ENCODE measurements at regions of chr4 and their contacts with region 1.

Region 1: GRCh38 chr4:80184053-80184790 is 13.1 kb upstream of the PRDM8 start:
- DNase-seq: peak; percentile 94
- H3K4me3 Mint-ChIP-seq: peak overlapping the region; percentile 88
- H3K27ac Mint-ChIP-seq: peak overlapping the region; percentile 85
- H3K4me1 Mint-ChIP-seq: peaks cover 46% of the 10 kb centered on the region
- H3K27me3 Mint-ChIP-seq: peaks cover 7% of the 10 kb centered on the region

Region 2: GRCh38 chr4:79923281-79923680 is 260.9 kb before region 1 on chr4:
- CTCF ChIA-PET with region 1: no interaction called
- POLR2A ChIA-PET with region 1: no interaction called
- intact Hi-C with region 1: loop called (anchors 10 kb)
- DNase-seq: no peak
- H3K4me3 Mint-ChIP-seq: no peak overlapping the region
- H3K27ac Mint-ChIP-seq: no peak overlapping the region
- H3K4me1 Mint-ChIP-seq: peaks cover 11% of the 10 kb centered on the region
- H3K27me3 Mint-ChIP-seq: no peaks in the 10 kb centered on the region

Region 3: DNA sequence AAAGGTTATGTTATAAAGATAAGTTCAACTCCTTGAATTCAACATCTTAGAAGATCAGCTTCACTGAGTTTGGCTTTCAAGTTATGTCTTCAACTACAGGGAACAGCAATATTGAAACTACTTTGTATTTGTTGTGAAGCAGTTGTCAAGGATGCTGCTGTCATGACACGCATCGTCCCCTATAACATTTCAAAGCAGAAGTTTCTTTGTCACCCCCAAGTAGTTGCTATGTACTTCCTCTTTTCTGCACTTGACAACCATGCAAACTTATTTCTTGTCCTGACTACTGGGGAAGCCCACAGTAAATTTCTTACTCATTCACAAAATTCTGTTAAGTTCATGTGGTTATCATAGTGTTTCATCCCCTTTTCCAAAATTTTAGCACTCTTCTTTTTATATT is 125.5 kb before region 1 on chr4:
- CTCF ChIA-PET with region 1: interaction called, 4 read pairs
- POLR2A ChIA-PET with region 1: interaction called, 6 read pairs
- intact Hi-C with region 1: loop called (anchors 1 kb)
- DNase-seq: peak; percentile 66
- H3K4me3 Mint-ChIP-seq: peak overlapping the region; percentile 72
- H3K27ac Mint-ChIP-seq: peak overlapping the region; percentile 91
- H3K4me1 Mint-ChIP-seq: peaks cover 70% of the 10 kb centered on the region
- H3K27me3 Mint-ChIP-seq: no peaks in the 10 kb centered on the region

Region 4: GRCh38 chr4:80138551-80139538 is 45.4 kb before region 1 on chr4:
- CTCF ChIA-PET with region 1: interaction called, 9 read pairs
- POLR2A ChIA-PET with region 1: interaction called, 3 read pairs
- intact Hi-C with region 1: loop called (anchors 1 kb)
- DNase-seq: peak; percentile 77
- H3K4me3 Mint-ChIP-seq: no peak overlapping the region
- H3K27ac Mint-ChIP-seq: peak overlapping the region; percentile 64
- H3K4me1 Mint-ChIP-seq: peaks cover 57% of the 10 kb centered on the region
- H3K27me3 Mint-ChIP-seq: no peaks in the 10 kb centered on the region

Region 5: DNA sequence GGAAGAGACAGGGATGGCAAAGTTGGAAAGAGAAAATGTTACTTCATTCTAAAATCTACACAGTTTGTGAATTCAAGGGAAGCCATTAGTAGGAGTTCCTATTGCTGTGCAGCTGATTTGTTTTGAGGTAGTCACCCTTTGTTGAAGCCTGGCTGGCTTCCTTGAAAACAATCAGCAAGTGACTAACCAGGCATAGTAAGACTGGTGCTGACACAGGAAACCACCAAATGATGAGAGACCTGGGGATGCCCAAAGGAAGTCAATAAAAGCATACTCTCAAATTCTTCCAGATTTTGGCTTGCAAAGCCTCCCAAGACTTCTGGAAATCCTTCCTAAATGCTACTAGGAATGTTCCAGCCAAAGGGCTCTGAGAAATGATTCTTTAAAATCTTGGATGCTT is 10.8 kb before region 1 on chr4:
- CTCF ChIA-PET with region 1: interaction called, 76 read pairs
- POLR2A ChIA-PET with region 1: interaction called, 18 read pairs
- intact Hi-C with region 1: loop called (anchors 1 kb)
- DNase-seq: peak; percentile 71
- H3K4me3 Mint-ChIP-seq: peak overlapping the region; percentile 18
- H3K27ac Mint-ChIP-seq: peak overlapping the region; percentile 81
- H3K4me1 Mint-ChIP-seq: peaks cover 55% of the 10 kb centered on the region
- H3K27me3 Mint-ChIP-seq: no peaks in the 10 kb centered on the region

Region 6: GRCh38 chr4:80215449-80216052 is 31.3 kb after region 1 on chr4:
- CTCF ChIA-PET with region 1: interaction called, 14 read pairs
- POLR2A ChIA-PET with region 1: no interaction called
- intact Hi-C with region 1: loop called (anchors 1 kb)
- DNase-seq: no peak
- H3K4me3 Mint-ChIP-seq: no peak overlapping the region
- H3K27ac Mint-ChIP-seq: no peak overlapping the region
- H3K4me1 Mint-ChIP-seq: peaks cover 2% of the 10 kb centered on the region
- H3K27me3 Mint-ChIP-seq: peaks cover 10% of the 10 kb centered on the region

Region 7: GRCh38 chr4:80266253-80266901 is 82.2 kb after region 1 on chr4 and contains the start of gene FGF5:
- CTCF ChIA-PET with region 1: no interaction called
- POLR2A ChIA-PET with region 1: no interaction called
- intact Hi-C with region 1: no loop called
- DNase-seq: peak; percentile 49
- H3K4me3 Mint-ChIP-seq: peak within 1 kb of the TSS; percentile 65
- H3K27ac Mint-ChIP-seq: no peak within 1 kb of the TSS
- H3K4me1 Mint-ChIP-seq: peaks cover 25% of the 10 kb centered on the region
- H3K27me3 Mint-ChIP-seq: peaks cover 73% of the 10 kb centered on the region
- total RNA-seq, gene FGF5: not detected

Region 8: DNA sequence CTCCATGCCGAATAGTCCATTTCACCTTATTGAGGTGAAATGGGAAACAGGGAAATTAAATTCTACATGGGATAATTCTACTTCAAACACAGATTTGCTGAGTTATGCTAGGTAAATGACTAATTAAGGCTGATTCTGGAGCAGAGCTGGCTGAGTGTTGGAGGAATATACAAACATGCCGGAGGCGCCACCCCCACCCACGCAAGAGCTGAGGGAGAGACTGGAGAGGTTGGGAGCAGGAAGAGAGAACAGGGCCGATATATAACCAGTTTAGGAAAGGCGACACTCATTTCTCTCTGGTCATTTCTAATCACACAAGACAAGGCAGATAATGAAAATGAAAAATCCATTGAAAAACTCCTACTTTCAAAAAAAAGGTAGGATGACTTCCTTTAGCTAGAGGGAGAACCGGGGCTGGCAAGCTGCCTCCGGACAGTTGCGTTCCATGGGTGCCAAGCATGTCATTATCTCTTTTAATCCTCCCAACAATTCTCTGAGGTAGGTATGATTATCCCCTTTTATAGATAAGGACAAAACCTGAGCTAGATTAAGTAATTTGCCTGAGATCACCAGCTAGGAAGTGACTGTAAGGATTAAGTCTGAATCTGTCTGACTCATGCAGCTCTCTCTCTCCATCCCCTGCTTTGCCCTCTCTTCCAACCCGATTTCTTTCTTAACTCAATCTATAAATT is 123.7 kb after region 1 on chr4:
- CTCF ChIA-PET with region 1: no interaction called
- POLR2A ChIA-PET with region 1: no interaction called
- intact Hi-C with region 1: no loop called
- DNase-seq: no peak
- H3K4me3 Mint-ChIP-seq: no peak overlapping the region
- H3K27ac Mint-ChIP-seq: no peak overlapping the region
- H3K4me1 Mint-ChIP-seq: no peaks in the 10 kb centered on the region
- H3K27me3 Mint-ChIP-seq: peaks cover 11% of the 10 kb centered on the region

Region 9: DNA sequence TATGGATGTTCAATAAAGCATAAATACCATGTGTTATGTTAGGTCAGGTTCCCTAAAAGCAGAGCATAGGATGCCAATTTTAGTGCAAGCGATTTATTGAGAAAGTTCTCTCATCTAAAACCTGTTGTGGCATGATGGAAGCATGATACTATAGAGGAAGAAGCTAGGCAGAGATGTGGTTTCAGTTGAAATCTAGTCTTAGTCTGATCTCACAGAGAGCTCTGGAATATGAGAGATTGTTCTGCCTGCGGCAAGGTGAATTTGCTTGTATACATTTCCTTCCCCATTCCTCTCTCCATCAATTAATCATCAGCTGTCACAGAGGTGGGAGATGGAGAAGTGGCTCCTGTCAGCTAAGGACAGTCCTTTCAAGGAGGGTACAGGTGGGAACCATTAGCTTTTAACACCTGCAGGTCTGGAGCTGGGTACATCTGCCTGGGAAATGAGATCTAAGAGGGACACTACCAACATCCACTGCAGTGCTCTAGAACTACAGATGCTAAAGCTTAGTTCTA is 403.7 kb after region 1 on chr4:
- CTCF ChIA-PET with region 1: no interaction called
- POLR2A ChIA-PET with region 1: no interaction called
- intact Hi-C with region 1: no loop called
- DNase-seq: no peak
- H3K4me3 Mint-ChIP-seq: no peak overlapping the region
- H3K27ac Mint-ChIP-seq: no peak overlapping the region
- H3K4me1 Mint-ChIP-seq: no peaks in the 10 kb centered on the region
- H3K27me3 Mint-ChIP-seq: no peaks in the 10 kb centered on the region

Measured in activated CD4-positive, alpha-beta memory T cell treated with anti-CD3 and anti-CD28 coated beads for 36 hours (primary cell).